ENCODE measurements at regions of chr1 and their contacts with region 1.

Region 1: GRCh38 chr1:174726167-174726879 is 273.4 kb upstream of the CACYBP start:
- DNase-seq: peak; percentile 13
- H3K4me3 ChIP-seq: no peak overlapping the region
- H3K27ac ChIP-seq: no peak overlapping the region
- H3K27me3 ChIP-seq: no peaks in the 10 kb centered on the region
- CTCF ChIP-seq: peak; percentile 59

Region 2: DNA sequence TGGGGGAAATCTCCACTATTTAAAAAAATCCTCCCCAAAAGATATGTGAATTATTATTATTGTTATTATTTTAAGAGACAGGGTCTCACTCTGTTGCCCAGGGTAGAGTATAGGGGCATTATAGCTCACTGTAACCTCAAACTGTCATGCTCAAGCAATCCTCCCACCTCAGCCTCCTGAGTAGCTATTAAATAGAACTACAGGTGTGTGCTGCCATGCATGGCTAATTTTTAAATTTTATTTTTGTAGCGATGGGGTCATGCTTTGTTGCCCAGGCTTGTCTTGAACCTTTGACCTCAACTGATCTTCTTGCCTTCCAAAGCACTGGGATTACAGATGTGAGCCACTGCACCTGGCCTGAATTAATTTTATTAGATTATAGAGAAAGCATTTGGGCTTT is 450.2 kb before region 1 on chr1:
- CTCF ChIA-PET with region 1: interaction called, 13 read pairs
- POLR2A ChIA-PET with region 1: no interaction called
- DNase-seq: no peak
- H3K4me3 ChIP-seq: no peak overlapping the region
- H3K27ac ChIP-seq: no peak overlapping the region
- H3K27me3 ChIP-seq: no peaks in the 10 kb centered on the region
- CTCF ChIP-seq: no peak

Region 3: DNA sequence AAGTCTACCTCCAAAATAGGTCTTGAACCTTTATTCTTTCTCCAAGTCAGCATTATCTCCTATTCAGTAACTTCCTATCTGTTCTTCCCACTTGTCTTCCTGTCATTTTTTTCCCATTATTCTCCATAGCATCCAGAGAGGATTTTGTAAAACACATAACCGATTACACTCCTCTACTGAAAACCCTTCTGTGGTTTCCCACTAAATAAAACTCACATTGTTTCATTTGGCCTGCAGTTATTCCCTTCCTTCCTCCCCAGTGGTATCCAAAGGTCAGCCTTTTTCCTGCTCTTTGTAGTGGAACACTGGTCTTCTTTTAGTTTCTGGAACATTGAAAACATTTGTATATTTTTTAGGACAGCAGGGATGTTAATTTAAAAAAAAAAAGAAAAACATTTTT is 12.5 kb before region 1 on chr1:
- CTCF ChIA-PET with region 1: interaction called, 10 read pairs
- POLR2A ChIA-PET with region 1: no interaction called
- DNase-seq: no peak
- H3K4me3 ChIP-seq: no peak overlapping the region
- H3K27ac ChIP-seq: no peak overlapping the region
- H3K27me3 ChIP-seq: no peaks in the 10 kb centered on the region
- CTCF ChIP-seq: no peak

Region 4: GRCh38 chr1:174743654-174744561 is 17.6 kb after region 1 on chr1:
- CTCF ChIA-PET with region 1: interaction called, 23 read pairs
- POLR2A ChIA-PET with region 1: no interaction called
- DNase-seq: peak; percentile 33
- H3K4me3 ChIP-seq: no peak overlapping the region
- H3K27ac ChIP-seq: no peak overlapping the region
- H3K27me3 ChIP-seq: no peaks in the 10 kb centered on the region
- CTCF ChIP-seq: peak; percentile 67